Activated B cell treated with CpG ODN at 0.5 μM for 24 hours (primary cell): ENCODE measurements at regions of chr1 and their contacts with region 1.

Region 1: DNA sequence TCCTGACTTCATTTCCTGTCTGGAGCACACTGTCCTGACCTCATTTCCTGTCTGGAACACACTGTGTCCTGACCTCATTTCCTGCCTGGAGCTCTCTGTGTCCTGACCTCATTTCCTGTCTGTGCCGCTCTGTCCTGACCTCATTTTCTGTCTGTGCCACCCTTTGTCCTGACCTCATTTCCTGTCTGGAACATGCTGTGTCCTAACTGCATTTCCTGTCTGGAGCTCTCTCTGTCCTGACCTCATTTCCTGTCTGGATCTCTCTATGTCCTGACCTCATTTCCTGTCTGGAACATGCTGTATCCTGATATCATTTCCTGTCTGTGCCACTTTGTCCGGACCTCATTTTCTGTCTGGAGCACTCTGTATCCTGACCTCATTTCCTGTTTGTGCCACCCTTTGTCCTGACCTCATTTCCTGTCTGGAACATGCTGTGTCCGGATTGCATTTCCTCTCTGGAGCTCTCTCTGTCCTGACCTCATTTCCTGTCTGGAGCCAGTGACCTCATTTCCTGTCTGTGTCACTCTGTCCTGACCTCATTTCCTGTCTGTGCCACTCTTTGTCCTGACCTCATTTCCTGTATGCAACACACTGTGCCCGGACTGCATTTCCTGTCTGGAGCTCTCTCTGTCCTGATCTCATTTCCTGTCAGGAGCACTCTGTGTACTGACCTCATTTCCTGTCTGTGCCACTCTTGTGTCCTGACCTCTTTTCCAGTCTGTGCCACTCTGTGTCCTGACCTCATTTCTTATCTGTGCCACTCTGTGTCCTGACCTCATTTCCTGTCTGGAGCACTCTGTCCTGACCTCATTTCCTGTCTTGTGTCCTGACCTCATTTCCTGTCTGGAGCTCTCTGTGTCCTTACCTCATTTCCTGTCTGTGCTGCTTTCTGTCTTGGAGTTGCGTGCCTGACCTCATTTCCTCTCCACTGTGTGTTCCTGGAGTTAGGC is 27.6 kb downstream of the SKI start:
- DNase-seq: peak; percentile 45
- ATAC-seq: peak; percentile 58
- H3K4me3 Mint-ChIP-seq: no peak overlapping the region
- H3K27ac Mint-ChIP-seq: no peak overlapping the region
- H3K4me1 Mint-ChIP-seq: peaks cover 60% of the 10 kb centered on the region
- H3K27me3 Mint-ChIP-seq: no peaks in the 10 kb centered on the region
- CTCF ChIP-seq: no peak

Region 2: DNA sequence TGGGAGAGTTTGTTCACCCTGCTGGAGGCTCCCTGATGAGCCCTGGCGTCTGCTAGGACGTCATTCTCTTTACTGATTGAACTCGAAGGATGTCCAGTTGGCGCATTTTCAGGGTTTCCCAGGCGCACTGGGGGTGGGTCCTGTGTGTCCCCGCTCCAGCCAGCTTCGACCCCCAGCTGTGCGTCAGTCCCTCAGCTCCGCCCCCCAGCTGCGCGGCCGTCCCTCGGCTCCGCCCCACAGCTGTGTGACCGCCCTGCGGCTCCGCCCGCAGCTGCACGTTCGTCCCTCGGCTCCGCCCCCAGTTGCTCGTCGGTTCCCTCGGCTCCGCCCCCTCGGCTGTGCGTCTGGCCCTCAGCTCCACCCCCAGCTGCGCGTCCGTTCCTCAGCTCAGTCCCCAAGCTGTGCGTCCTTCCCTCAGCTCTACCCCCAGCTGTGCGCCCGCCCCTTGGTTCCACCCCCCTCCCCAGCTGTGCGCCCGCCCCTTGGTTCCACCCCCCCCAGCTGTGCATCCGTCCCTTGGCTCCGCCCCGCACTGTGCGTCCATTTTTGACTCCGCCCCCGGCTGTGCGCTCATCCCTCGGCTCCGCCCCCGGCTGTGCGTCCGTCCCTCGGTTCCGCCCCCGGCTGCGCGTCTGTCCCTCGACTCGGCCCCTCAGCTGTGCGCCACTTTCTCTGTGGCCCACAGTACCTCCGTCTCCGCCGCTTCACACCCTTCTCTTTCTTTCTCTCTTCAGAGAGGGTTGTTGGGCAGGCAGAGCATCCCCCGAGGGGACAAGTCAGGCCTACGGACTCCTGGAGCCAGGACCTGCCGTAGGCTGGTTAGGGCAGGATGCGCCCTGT is 122.4 kb before region 1 on chr1:
- CTCF ChIA-PET with region 1: no interaction called
- POLR2A ChIA-PET with region 1: no interaction called
- intact Hi-C with region 1: no loop called
- DNase-seq: peak; percentile 97
- ATAC-seq: peak; percentile 90
- H3K4me3 Mint-ChIP-seq: peak overlapping the region; percentile 80
- H3K27ac Mint-ChIP-seq: peak overlapping the region; percentile 75
- H3K4me1 Mint-ChIP-seq: peaks cover 14% of the 10 kb centered on the region
- H3K27me3 Mint-ChIP-seq: no peaks in the 10 kb centered on the region
- CTCF ChIP-seq: no peak

Region 3: DNA sequence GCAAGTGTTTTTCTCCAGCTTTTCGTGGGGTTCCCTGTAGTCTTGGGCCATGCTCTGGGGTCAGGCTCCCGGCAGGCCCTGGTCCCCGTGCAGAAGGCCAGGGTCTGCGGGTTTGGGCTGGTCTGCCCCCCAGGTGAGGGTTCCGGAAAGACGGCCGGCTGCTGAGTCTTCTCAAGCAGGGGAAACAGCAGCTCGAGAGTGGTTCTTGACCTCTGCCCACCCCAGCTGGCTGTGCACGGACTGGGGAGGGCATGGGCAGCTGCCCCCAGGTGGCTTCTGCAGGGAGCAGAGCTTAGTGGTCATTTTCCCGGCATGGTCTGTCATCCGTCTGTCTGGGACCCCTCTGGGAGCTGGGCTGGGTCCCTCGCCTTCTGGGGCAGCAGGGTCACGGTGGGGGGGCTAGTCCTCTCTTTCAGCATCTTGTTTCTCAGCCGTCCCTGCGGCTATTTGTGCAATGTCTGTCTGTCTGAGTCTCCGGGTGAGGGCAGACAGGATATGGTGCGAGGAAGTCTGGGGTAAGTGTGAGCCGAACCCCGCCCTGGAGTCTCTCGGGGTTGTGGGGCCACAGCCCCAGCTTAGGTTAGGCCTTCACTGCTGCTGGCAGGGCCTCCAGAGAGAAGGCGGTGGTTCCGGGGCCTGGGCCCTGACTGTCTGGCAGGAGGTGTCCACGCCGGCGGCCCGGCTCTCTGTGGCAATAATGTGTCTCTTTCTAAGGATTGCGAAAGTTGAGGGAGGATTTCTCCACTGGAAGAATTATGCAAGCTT is 21.5 kb before region 1 on chr1:
- CTCF ChIA-PET with region 1: no interaction called
- POLR2A ChIA-PET with region 1: interaction called, 23 read pairs
- intact Hi-C with region 1: loop called (anchors 1 kb)
- DNase-seq: no peak
- ATAC-seq: peak; percentile 81
- H3K4me3 Mint-ChIP-seq: peak overlapping the region; percentile 76
- H3K27ac Mint-ChIP-seq: peak overlapping the region; percentile 91
- H3K4me1 Mint-ChIP-seq: peaks cover 87% of the 10 kb centered on the region
- H3K27me3 Mint-ChIP-seq: no peaks in the 10 kb centered on the region
- CTCF ChIP-seq: no peak

Region 4: DNA sequence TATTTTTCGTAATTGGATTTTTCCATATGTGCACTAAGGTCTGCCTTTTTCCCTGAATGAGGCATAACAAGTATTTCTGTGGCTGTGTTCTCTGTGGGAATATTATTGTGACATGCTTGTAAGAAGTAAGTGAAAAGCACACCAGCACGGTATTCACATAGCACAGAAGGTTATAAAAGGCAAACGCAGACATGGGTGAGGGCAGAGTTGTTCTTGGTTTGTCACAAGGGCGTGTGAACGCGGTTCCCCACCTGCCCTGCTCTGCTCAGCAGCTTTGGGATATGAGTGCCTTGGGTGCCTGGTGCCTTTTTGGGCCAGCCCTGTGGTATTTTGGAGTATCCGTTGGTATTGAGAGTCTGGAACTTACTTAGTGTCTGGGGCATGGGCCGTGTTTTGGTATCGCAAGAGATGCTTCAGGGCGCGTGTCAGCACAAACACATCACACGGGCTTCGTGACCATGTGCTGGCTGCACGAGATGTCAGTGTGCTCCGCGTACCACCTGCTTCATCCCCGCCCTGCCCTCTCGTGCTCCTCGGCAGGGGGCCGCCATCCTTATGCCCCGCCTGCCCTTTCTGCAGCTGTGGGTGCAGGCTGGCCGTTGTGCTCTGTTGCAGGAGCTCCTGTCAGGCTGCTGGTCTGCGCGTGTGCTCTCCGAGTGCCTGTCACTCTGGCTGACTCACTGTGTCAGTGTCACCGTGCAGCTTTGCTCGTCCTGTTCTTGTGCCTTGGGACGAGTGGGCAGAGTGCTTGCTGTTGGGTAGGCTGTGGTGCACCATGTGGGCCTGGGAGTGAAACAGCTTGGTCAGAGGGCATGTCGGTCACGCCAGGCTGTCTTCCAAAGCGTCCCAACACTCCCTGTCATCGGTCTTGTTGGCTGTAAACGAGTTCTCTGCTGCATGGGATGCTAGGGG is 12.6 kb before region 1 on chr1:
- CTCF ChIA-PET with region 1: no interaction called
- POLR2A ChIA-PET with region 1: interaction called, 5 read pairs
- intact Hi-C with region 1: loop called (anchors 1 kb)
- DNase-seq: no peak
- ATAC-seq: no peak
- H3K4me3 Mint-ChIP-seq: no peak overlapping the region
- H3K27ac Mint-ChIP-seq: no peak overlapping the region
- H3K4me1 Mint-ChIP-seq: peaks cover 69% of the 10 kb centered on the region
- H3K27me3 Mint-ChIP-seq: no peaks in the 10 kb centered on the region
- CTCF ChIP-seq: no peak

Region 5: DNA sequence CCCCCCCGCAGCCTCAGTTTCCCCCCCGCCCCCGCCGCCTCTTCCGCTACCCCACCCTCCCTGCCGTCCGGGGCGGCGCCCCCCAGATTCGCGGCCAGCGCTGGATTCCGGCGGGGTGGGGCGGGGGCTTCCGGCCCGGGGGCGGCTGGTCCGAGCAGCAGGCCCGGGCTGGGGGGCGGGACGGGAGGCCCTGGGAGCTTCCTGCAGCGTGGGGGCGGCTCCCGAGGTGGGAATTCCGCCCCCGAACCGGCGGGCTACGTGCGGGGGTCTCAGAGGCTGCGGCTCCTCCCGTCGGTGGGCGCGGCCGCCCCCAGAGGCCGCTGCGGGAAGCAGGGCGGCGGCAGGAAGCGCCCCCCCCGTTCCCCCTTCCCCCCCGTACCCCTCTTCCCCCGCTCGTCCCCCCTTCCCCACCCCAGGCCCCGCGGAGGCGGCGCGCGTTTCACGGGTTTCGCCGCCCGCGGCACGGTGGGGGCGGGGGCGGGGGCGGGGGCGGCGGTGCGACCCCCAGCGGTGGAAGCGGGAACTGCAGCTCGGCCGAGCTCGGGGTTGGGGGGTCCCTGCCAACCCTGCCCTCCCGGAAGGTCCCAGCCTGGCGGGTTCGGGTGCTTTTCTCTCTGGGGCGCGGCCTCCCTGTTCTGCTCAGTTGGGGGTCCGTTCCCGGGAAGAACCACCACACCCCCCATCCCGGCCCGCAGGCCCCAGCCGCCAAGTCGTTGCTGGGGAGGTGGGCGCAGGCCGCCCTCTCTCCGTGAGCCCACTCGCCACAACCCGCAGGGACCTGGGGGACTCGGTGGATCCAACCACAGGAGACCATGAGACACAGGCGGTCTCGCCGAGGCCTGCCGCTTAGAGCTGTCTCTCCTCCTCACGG is 59.3 kb after region 1 on chr1:
- CTCF ChIA-PET with region 1: interaction called, 5 read pairs
- POLR2A ChIA-PET with region 1: interaction called, 7 read pairs
- intact Hi-C with region 1: loop called (anchors 2 kb)
- DNase-seq: peak; percentile 78
- ATAC-seq: peak; percentile 58
- H3K4me3 Mint-ChIP-seq: peak overlapping the region; percentile 66
- H3K27ac Mint-ChIP-seq: peak overlapping the region; percentile 18
- H3K4me1 Mint-ChIP-seq: peaks cover 37% of the 10 kb centered on the region
- H3K27me3 Mint-ChIP-seq: no peaks in the 10 kb centered on the region
- CTCF ChIP-seq: peak; percentile 83